ENCODE measurements at regions of chr1 and their contacts with region 1.

Region 1: GRCh38 chr1:33055210-33056008 is 18.7 kb upstream of the AK2 start:
- DNase-seq: peak; percentile 60
- ATAC-seq: peak; percentile 28
- H3K4me3 ChIP-seq: no peak overlapping the region
- H3K4me3 Mint-ChIP-seq: no peak overlapping the region
- H3K27ac ChIP-seq: no peak overlapping the region
- H3K27ac Mint-ChIP-seq: peak overlapping the region; percentile 37
- H3K4me1 ChIP-seq: peaks cover 9 to 11% of the 10 kb centered on the region in 2 donors
- H3K4me1 Mint-ChIP-seq: peaks cover 12% of the 10 kb centered on the region
- H3K27me3 ChIP-seq: no peaks in the 10 kb centered on the region
- H3K27me3 Mint-ChIP-seq: no peaks in the 10 kb centered on the region
- CTCF ChIP-seq: peak; percentile 68

Region 2: GRCh38 chr1:32925403-32926162 is 129.8 kb before region 1 on chr1:
- CTCF ChIA-PET with region 1: interaction called, 125 read pairs
- POLR2A ChIA-PET with region 1: no interaction called
- intact Hi-C with region 1: no loop called
- DNase-seq: peak; percentile 50
- ATAC-seq: peak; percentile 47
- H3K4me3 ChIP-seq: no peak overlapping the region
- H3K4me3 Mint-ChIP-seq: peak overlapping the region; percentile 17
- H3K27ac ChIP-seq: no peak overlapping the region
- H3K27ac Mint-ChIP-seq: no peak overlapping the region
- H3K4me1 ChIP-seq: peaks cover 18 to 22% of the 10 kb centered on the region in 2 donors
- H3K4me1 Mint-ChIP-seq: peaks cover 17% of the 10 kb centered on the region
- H3K27me3 ChIP-seq: peaks cover 0 to 46% (median 27%) of the 10 kb centered on the region in 4 experiments
- H3K27me3 Mint-ChIP-seq: peaks cover 60% of the 10 kb centered on the region
- CTCF ChIP-seq: no peak

Region 3: GRCh38 chr1:32939655-32940371 is 115.6 kb before region 1 on chr1:
- CTCF ChIA-PET with region 1: interaction called, 125 read pairs
- POLR2A ChIA-PET with region 1: no interaction called
- intact Hi-C with region 1: no loop called
- DNase-seq: no peak
- ATAC-seq: no peak
- H3K4me3 ChIP-seq: no peak overlapping the region
- H3K4me3 Mint-ChIP-seq: no peak overlapping the region
- H3K27ac ChIP-seq: no peak overlapping the region
- H3K27ac Mint-ChIP-seq: no peak overlapping the region
- H3K4me1 ChIP-seq: no peaks in the 10 kb centered on the region
- H3K4me1 Mint-ChIP-seq: no peaks in the 10 kb centered on the region
- H3K27me3 ChIP-seq: no peaks in the 10 kb centered on the region
- H3K27me3 Mint-ChIP-seq: no peaks in the 10 kb centered on the region
- CTCF ChIP-seq: no peak

Region 4: DNA sequence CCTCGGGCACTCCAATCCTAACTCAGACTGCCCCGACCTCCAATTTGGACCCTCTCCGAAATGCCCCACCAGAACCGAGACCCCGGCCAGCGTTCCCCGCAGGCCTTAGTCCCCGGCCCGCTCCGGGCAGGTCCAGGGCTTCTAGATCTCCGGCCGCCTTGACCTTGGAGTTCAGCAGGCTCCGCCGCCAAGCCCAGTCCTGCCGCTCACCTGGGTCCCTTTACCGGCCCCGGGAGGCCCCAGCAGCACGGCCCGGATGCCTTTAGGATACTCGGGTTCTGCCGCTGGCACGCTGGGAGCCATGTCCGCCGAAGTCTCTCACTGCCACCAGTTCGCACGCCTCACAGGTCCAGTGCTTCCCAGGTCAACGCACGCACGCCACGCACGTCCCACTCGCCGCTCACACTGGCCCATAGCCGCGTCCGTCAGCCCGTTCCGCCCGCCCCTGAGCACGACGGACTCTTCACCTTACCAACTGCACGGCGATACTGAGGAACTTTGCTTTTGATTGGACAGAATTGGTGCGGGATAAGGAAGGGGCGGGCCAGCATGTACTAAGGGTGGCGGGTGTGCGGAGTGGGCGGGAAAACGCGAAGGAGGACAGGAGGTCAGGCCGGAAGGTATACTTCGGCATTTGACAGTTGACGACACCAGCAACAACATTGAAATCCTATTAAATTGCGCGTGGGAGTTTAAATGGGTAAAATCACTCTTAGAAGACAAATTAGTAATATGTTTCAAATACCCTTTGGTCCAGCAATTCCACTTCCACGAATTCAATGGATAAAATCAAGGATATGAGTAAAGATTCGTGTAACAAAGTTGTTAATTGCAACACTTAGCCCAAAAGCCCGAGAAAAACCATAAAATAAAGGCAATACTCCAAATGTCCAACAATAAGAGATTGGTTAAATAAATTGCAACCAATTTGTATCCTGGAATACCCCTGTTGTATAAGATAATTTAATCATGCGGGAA is 18.6 kb before region 1 on chr1 and contains the start of gene AK2:
- CTCF ChIA-PET with region 1: interaction called, 4 read pairs
- POLR2A ChIA-PET with region 1: interaction called, 12 read pairs
- intact Hi-C with region 1: no loop called
- DNase-seq: peak; percentile 94
- ATAC-seq: peak; percentile 99
- H3K4me3 ChIP-seq: peak within 1 kb of the TSS; percentile 72 to 99 (median 77)
- H3K4me3 Mint-ChIP-seq: peak within 1 kb of the TSS; percentile 97
- H3K27ac ChIP-seq: peak within 1 kb of the TSS; percentile 42 to 78
- H3K27ac Mint-ChIP-seq: peak within 1 kb of the TSS; percentile 91
- H3K4me1 ChIP-seq: peaks cover 16 to 24% of the 10 kb centered on the region in 2 donors
- H3K4me1 Mint-ChIP-seq: peaks cover 45% of the 10 kb centered on the region
- H3K27me3 ChIP-seq: no peaks in the 10 kb centered on the region
- H3K27me3 Mint-ChIP-seq: no peaks in the 10 kb centered on the region
- CTCF ChIP-seq: no peak
- total RNA-seq, gene AK2: 104 and 109 TPM in 2 replicates

Region 5: DNA sequence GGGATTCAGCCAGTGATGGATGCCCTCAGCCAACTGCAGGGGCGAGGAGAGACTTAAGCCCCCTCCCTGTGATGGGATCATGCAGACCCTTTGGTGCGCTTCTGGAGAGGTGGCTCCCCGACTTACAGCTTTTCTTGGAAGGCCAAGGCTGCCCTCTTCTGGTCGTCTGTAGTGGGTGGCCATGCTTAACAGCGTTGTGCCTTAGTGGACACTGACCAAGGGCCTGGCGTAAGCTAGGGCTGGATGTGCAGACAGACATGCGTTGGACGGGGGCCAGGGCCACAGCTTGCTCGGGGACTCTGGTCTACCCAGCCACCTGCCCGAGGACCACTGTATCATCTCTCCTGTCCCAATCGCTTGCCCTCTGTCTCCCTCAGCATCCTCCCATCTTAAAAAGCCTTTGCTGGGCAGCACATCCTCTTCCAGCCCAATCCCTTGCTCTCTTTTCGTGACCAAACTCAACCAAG is 31.0 kb after region 1 on chr1:
- CTCF ChIA-PET with region 1: interaction called, 10 read pairs
- POLR2A ChIA-PET with region 1: no interaction called
- intact Hi-C with region 1: no loop called
- DNase-seq: peak; percentile 68
- ATAC-seq: peak; percentile 53
- H3K4me3 ChIP-seq: no peak overlapping the region
- H3K4me3 Mint-ChIP-seq: no peak overlapping the region
- H3K27ac ChIP-seq: no peak overlapping the region
- H3K27ac Mint-ChIP-seq: no peak overlapping the region
- H3K4me1 ChIP-seq: peaks cover 19 to 24% of the 10 kb centered on the region in 2 donors
- H3K4me1 Mint-ChIP-seq: peaks cover 32% of the 10 kb centered on the region
- H3K27me3 ChIP-seq: peaks cover 0 to 5% (median 2%) of the 10 kb centered on the region in 4 experiments
- H3K27me3 Mint-ChIP-seq: peaks cover 10% of the 10 kb centered on the region
- CTCF ChIP-seq: peak; percentile 74